Posterior vena cava (tissue), 2 donors: ENCODE measurements at regions of chr6 and their contacts with region 1.

Region 1: DNA sequence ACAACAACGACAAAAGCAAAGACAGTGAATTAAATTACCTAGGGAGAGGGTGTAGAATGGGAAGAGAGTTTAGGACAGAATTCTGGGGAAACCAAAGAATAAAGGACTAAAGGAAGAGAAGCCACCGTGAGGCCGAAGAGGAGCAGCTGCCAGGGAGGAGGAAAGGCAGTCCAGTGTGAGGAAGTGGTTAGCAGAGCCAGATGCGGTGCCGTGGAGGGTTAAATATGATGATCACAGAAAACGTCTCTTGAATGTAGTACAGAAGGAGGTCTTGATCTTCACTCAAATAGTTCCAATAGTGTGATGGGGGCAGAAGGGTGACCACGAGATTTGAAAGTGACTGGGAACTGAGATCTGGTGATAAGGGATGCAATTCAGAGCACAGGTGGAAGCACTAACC is 67.7 kb downstream of the TMEM244 start:
- DNase-seq: no peak

Region 2: DNA sequence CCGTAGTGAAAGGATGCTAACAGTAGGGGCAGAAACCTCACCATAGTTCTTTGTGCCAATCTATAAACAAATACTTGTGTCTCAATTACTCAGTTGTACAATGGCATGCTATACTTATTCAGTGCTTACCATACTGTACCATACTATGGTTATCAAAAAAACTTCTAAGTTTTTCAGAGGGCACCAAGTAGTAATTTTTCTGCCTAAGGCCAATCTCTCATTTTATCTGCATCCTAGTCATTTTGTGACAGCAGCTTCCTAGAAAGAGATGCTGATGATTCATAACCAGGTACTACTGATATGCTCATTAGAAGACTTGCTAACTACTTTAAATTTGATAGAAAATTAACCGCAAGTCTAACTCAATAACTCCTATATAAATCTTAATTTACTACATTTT is 24.8 kb after region 1 on chr6:
- intact Hi-C with region 1: loop called in 1 of 2 experiments (anchors 1 kb)
- DNase-seq: no peak